ENCODE measurements at regions of chr1 and their contacts with region 1.

Region 1: DNA sequence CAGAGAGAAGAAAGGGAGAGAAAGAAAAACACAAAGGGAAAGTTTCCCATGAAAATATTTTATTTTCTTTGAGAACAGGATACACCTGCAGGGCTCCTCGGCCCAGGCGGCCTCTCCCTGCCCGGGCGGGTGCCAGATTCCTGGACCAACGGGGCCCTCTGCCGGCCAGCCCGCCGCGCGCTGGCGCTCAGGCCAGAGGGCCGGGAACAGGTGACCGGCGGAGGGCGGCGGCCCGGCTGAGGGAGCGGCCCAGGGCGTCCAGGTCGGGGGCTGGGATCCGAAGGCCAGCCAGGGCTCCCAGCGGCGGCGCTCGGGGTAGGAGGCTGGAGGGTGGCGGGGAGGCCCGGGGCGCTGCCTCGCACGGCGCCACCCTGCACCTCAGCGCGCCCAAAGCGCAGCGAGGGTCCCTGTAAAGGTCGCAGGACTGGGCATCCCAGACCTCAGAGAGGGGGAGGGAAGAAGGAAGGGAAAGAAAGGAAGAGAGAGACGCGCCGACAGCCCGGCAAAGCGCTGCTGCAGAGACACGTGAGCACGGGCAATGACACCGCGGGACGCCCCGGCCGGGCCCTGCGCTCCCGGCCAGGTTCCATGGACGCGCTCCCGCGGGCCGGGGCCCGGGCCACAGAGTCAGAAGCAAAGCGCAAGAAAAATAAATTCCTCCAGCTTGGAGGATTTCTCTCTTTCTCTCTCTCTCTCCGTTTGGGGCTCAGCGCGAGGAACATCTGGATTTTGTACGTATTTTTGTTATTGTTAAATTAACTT is 927 bp downstream of the WNT9A start:
- DNase-seq: peak; percentile 60 to 72
- H3K4me3 ChIP-seq: peak overlapping the region; percentile 51 to 66
- H3K27ac ChIP-seq: no peak overlapping the region
- H3K4me1 ChIP-seq: peaks cover 0 to 42% (median 26%) of the 10 kb centered on the region in 4 donors
- H3K27me3 ChIP-seq: peaks cover 0 to 73% of the 10 kb centered on the region in 2 donors
- CTCF ChIP-seq: peak; percentile 67

Region 2: DNA sequence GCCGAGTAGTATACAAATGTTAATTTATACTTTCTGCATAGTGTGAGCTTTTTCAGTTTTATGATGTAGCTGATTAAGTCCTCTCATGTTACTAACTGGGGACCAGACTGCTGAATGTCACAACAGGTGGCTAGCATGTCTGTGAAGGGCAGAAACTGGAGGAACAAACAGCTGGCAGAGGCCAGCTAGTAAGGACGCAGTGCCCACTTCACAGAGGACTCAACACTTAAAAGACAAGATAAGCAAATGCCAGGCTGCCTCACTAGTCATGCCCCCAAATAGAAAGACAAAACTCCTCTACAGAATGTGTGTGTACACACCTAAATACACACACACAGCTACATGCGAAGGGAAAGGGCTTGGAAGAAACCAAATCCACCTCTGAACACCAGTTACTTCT is 457.2 kb before region 1 on chr1:
- intact Hi-C with region 1: loop called (anchors 10 kb)
- DNase-seq: no peak
- H3K4me3 ChIP-seq: no peak overlapping the region
- H3K27ac ChIP-seq: no peak overlapping the region
- H3K4me1 ChIP-seq: no peaks in the 10 kb centered on the region
- H3K27me3 ChIP-seq: no peaks in the 10 kb centered on the region
- CTCF ChIP-seq: no peak

Region 3: DNA sequence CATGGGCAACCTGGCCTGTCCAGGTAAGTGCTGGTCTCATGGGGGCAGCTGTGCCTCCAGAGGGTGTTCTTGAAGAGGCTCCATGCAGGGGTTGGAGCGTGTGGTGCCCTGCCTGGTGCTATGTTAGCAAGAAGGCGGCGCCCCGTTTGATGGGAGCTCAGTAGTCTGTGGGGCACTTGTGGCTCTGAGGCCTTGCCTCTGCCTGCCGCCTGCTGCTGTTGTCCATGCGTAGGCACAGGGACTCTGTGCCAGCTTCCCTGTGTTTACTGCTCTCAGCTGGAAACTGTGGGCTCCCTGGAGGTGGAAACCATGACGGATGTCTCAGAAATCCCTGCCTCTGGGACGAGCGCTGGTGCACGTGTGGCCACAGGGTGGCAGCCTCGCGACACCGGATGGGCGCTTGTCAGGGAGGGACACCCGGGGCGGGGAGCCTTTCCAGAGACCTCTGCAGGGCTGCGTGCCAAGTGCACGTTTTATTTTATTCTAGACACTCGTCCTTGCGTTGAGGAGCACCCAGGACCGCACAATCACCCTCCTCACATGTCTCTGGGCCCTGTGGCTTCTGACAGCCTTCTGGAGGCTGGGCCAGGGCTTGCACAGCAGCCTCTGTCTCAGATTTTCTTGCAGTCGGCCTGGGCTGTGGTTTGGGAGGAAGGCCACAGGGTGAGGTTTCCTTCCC is 184.4 kb before region 1 on chr1:
- intact Hi-C with region 1: loop called (anchors 5 kb)
- DNase-seq: peak; percentile 72 to 85
- H3K4me3 ChIP-seq: no peak overlapping the region
- H3K27ac ChIP-seq: no peak overlapping the region
- H3K4me1 ChIP-seq: peaks cover 0 to 16% (median 6%) of the 10 kb centered on the region in 4 donors
- H3K27me3 ChIP-seq: no peaks in the 10 kb centered on the region
- CTCF ChIP-seq: peak; percentile 69 to 82

Measured in tibial artery (tissue), 4 donors.